ENCODE measurements at regions of chr6 and their contacts with region 1.

Region 1: GRCh38 chr6:143940011-143940597 is 68.0 kb downstream of the PLAGL1 start:
- DNase-seq: peak; percentile 75
- ATAC-seq: peak; percentile 96
- H3K4me3 Mint-ChIP-seq: no peak overlapping the region
- H3K27ac Mint-ChIP-seq: no peak overlapping the region
- H3K4me1 Mint-ChIP-seq: peaks cover 10% of the 10 kb centered on the region
- H3K27me3 Mint-ChIP-seq: no peaks in the 10 kb centered on the region
- CTCF ChIP-seq: peak; percentile 92

Region 2: DNA sequence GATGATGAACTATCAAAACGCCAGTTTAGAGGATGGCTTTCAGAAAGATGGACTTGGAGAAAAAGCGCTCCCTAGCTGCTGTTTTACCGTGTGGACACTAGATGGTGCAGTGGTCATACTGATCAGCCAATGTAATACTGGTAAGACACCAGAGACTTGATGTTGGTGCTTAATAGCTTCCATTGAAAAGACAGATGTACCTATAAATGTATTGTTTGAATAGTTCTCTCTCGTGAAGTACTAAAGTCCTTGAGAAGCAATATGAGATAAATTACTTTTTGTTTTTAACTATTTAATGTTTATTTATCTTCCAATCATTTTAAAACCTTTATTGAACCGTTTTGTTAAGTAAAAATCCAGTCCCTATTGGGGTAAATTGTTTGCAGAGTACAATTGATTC is 364.7 kb before region 1 on chr6:
- CTCF ChIA-PET with region 1: interaction called, 41 read pairs
- POLR2A ChIA-PET with region 1: no interaction called
- intact Hi-C with region 1: loop called (anchors 10 kb)
- DNase-seq: peak; percentile 61
- ATAC-seq: peak; percentile 98
- H3K4me3 Mint-ChIP-seq: no peak overlapping the region
- H3K27ac Mint-ChIP-seq: no peak overlapping the region
- H3K4me1 Mint-ChIP-seq: peaks cover 5% of the 10 kb centered on the region
- H3K27me3 Mint-ChIP-seq: no peaks in the 10 kb centered on the region
- CTCF ChIP-seq: peak; percentile 86

Region 3: DNA sequence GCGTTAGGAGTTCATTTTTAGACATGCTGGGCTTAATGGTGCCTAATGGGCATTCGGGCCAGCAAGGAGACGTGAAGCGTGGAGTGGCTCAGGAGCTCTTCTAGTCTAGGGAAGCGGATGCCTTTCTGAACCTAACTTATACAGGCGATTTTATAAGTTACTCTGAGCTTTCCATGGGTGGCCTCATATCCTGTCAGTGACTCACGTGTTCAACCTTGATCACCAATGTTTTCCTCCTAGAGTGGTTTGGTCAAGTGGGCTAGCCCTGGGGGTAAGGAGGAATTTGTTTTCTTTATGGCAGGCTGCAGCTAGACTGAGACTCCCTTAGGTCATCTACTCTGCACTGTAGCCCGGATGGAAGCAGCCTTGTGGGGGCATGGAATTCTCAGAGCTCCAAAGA is 15.9 kb after region 1 on chr6:
- CTCF ChIA-PET with region 1: interaction called, 26 read pairs
- POLR2A ChIA-PET with region 1: no interaction called
- intact Hi-C with region 1: no loop called
- DNase-seq: no peak
- ATAC-seq: no peak
- H3K4me3 Mint-ChIP-seq: no peak overlapping the region
- H3K27ac Mint-ChIP-seq: no peak overlapping the region
- H3K4me1 Mint-ChIP-seq: no peaks in the 10 kb centered on the region
- H3K27me3 Mint-ChIP-seq: no peaks in the 10 kb centered on the region
- CTCF ChIP-seq: no peak

Region 4: DNA sequence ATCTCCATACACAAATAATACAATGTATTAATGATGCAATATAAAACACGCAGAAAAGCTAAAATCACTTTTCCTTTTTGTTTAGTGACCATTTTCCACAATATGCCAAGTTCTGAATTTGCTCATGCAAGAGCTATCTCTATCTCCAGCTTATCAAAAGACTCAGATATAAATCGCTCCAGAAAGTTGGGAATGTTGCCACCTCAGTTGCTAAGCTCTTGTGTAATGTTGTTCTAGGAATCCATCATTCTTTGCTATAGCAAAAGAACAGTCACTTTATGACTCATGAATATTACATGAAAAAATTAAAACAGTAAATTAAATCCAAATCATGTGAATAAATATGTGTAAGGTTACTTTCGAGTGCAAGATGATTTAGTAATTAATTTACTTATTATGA is 59.3 kb after region 1 on chr6:
- CTCF ChIA-PET with region 1: interaction called, 15 read pairs
- POLR2A ChIA-PET with region 1: no interaction called
- intact Hi-C with region 1: no loop called
- DNase-seq: no peak
- ATAC-seq: no peak
- H3K4me3 Mint-ChIP-seq: no peak overlapping the region
- H3K27ac Mint-ChIP-seq: no peak overlapping the region
- H3K4me1 Mint-ChIP-seq: no peaks in the 10 kb centered on the region
- H3K27me3 Mint-ChIP-seq: peaks cover 3% of the 10 kb centered on the region
- CTCF ChIP-seq: no peak

Region 5: GRCh38 chr6:144027932-144028587 is 88.0 kb after region 1 on chr6:
- CTCF ChIA-PET with region 1: interaction called, 11 read pairs
- POLR2A ChIA-PET with region 1: no interaction called
- intact Hi-C with region 1: no loop called
- DNase-seq: no peak
- ATAC-seq: no peak
- H3K4me3 Mint-ChIP-seq: no peak overlapping the region
- H3K27ac Mint-ChIP-seq: no peak overlapping the region
- H3K4me1 Mint-ChIP-seq: no peaks in the 10 kb centered on the region
- H3K27me3 Mint-ChIP-seq: no peaks in the 10 kb centered on the region
- CTCF ChIP-seq: no peak

Region 6: DNA sequence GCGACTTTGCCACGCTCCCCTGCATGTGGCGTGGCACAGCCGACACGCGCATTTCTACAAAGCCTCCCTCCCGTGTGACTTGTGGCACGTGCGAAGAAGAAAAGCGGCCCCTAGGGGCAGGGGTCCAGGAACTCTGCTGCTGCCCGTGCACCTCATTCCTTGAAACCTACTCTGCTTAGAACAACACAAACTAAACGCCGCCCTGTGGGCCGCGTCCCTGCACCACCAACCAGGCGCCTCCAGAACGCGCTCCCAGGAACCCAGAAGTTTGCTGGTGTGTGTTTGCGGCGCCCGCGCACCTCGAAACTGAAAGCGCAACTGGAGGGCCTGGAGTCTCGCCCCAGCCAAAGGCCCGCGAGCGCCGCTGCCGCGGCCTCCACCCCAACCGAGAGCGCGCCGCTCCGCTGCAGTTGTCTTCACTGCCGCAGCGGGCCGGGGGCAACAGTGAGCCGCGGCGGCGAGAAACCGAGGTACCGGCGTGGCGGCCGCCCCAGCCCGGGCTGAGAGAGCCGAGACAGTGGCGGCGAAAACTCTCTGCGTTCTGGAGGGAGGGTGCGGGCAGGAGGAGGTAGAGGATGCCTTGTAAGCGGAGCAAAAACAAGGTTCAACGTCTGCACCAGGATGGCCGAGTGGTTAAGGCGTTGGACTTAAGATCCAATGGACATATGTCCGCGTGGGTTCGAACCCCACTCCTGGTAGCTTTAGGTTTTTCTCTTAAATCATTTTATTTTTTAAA is 276.0 kb after region 1 on chr6:
- CTCF ChIA-PET with region 1: interaction called, 26 read pairs
- POLR2A ChIA-PET with region 1: interaction called, 3 read pairs
- intact Hi-C with region 1: loop called (anchors 5 kb)
- DNase-seq: peak; percentile 94
- ATAC-seq: peak; percentile 92
- H3K4me3 Mint-ChIP-seq: peak overlapping the region; percentile 81
- H3K27ac Mint-ChIP-seq: peak overlapping the region; percentile 93
- H3K4me1 Mint-ChIP-seq: peaks cover 34% of the 10 kb centered on the region
- H3K27me3 Mint-ChIP-seq: peaks cover 2% of the 10 kb centered on the region
- CTCF ChIP-seq: peak; percentile 73